ENCODE measurements at regions of chr5 and their contacts with region 1.

Region 1: DNA sequence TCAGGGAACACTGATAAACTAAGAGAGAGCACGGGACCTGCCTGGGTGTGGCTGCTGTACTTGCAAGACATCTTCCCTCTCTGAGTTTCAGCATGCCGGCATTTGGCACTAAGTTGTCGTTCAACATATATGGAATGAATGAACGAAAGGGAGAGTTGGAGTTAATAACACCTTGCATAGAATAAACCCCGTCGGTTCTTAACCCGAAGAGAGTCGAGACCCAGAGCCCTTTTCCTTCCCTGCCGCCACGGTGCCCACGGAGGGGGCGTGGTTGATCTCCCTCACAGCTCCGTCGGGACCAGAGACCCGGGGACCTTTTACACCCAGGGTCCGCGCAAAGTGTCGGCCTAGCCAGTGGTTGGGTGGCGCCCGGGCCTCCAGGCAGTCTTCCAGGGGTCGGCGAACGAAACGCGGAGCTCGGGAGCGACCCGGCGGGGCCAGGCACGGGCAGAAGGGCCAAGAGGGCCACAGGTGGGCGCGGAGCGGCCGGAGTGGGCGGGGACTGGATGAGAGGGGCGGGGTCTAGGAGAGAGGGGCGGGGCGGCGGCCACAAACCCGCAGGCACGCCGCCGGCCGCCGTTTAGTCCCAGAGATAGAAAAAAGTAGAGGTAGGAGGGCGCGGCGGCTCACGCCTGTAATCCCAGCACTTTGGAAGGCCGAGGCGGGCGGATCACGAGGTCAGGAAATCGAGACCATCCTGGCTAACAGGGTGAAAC is 735 bp upstream of the RPL26L1 start:
- DNase-seq: peak in 7 of 9 donors; percentile 13 to 76 (median 57)
- ATAC-seq: peak; percentile 84
- H3K4me3 ChIP-seq: peak overlapping the region; percentile 90
- H3K4me3 Mint-ChIP-seq: peak overlapping the region; percentile 88 to 98 (median 97)
- H3K27ac ChIP-seq: peak overlapping the region; percentile 95
- H3K27ac Mint-ChIP-seq: peak overlapping the region; percentile 94 to 99 (median 98)
- H3K4me1 ChIP-seq: peaks cover 9 to 10% of the 10 kb centered on the region in 2 donors
- H3K4me1 Mint-ChIP-seq: peaks cover 18 to 45% (median 37%) of the 10 kb centered on the region in 7 donors
- H3K27me3 ChIP-seq: no peaks in the 10 kb centered on the region
- H3K27me3 Mint-ChIP-seq: peaks cover 0 to 4% (median 0%) of the 10 kb centered on the region in 5 donors

Region 2: DNA sequence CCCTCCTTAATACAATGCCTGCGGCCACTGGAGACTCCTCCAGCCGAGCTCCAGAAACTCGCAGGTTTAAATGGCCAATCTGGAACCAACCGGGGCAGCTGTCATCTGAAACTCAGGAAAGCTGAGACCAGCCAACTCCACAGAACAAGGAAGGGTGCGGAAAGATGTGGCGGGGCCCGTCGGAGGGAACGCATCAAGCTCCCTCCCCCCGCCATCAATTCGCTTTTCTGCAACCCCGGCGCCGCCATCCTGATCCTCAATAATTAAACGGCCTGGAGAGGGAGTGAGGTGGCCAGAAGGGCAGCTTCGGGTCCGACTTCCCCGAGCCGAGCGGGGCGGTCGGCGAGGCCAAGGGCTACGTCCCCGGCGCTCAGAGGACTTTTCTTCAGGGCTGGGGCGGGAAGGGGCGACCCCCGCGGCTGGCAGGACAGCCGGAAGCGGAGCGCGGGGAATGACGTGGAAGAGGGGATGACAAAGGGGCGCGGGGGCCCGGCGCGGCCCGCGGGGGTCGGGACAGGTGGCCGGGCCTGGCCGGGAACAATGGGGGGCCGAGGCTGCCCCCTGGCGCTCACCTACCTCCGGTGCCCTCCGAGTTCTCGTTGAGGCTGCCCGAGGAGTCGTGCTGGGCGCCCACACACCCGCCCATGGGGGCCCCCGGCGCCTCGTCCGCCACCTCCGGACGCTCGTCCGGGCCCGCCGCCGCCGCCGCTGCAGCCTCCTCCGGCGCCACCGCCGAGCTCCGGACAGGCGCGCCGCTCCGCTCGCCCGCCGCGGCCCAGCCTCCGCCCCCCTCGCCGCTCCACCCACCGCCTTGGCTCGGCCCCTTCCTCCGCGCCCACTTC is 675.2 kb before region 1 on chr5 and contains the start of gene UBTD2:
- CTCF ChIA-PET with region 1: no interaction called
- POLR2A ChIA-PET with region 1: no interaction called
- intact Hi-C with region 1: loop called in 1 of 2 experiments (anchors 2 kb)
- DNase-seq: peak in 7 of 9 donors; percentile 51 to 84 (median 67)
- ATAC-seq: peak; percentile 89
- H3K4me3 ChIP-seq: peak within 1 kb of the TSS; percentile 73
- H3K4me3 Mint-ChIP-seq: peak within 1 kb of the TSS; percentile 85 to 94 (median 90)
- H3K27ac ChIP-seq: peak within 1 kb of the TSS; percentile 61
- H3K27ac Mint-ChIP-seq: peak within 1 kb of the TSS; percentile 67 to 94 (median 75)
- H3K4me1 ChIP-seq: peaks cover 11 to 13% of the 10 kb centered on the region in 2 donors
- H3K4me1 Mint-ChIP-seq: peaks cover 10 to 34% (median 29%) of the 10 kb centered on the region in 7 donors
- H3K27me3 ChIP-seq: no peaks in the 10 kb centered on the region
- H3K27me3 Mint-ChIP-seq: peaks cover 0 to 24% (median 0%) of the 10 kb centered on the region in 5 donors
- total RNA-seq, gene UBTD2: 2.3 to 8.3 (median 5.9) TPM

Region 3: DNA sequence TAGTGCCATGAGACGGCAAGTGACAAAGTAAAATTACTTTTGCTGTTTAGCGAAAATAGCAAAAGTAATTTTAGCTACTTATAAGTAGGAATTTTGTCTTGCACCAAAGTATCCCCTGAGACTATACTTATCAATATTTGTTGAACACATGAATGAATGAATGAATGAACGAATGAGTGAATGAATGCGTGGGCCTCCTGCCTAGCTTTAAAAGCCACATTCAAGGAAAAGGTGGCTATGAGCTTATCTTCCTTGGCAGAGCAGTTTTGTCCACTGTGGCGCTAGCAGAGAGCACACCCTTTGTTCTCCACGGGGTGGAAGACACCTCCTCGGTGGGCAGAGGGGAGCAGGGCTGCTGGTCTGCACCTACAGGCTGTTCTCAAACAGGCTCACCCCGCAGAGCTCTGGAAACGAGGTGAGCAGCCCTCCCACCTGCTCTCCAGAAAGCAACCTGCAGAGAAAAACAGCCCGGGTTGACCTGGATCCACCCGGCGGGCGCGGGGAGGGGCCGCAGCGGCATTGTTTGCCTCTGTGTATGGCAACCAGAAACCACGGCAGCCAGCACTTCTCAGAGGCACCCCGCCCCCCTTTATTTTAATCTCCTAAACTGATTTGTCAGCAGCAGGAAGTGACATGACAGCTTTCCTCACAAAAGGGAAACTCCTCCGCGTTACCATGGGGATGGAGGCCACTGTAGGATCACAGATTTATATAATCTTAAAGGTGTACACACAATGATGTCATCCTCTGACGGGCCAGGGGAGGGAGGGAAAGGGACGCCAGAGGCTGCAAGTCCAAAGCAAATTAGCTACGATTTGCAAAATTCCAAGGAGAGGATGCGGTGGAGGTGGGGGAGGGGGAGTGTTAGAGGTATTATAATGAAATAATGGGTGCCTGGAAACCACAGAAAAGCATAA is 193.4 kb before region 1 on chr5:
- CTCF ChIA-PET with region 1: no interaction called
- POLR2A ChIA-PET with region 1: interaction called, 6 read pairs
- intact Hi-C with region 1: loop called (anchors 1 kb)
- DNase-seq: peak; percentile 86 to 100 (median 99)
- ATAC-seq: peak; percentile 73
- H3K4me3 ChIP-seq: peak overlapping the region; percentile 64
- H3K4me3 Mint-ChIP-seq: peak overlapping the region; percentile 80 to 93 (median 84)
- H3K27ac ChIP-seq: peak overlapping the region; percentile 93
- H3K27ac Mint-ChIP-seq: peak overlapping the region; percentile 94 to 100 (median 97)
- H3K4me1 ChIP-seq: peaks cover 25 to 31% of the 10 kb centered on the region in 2 donors
- H3K4me1 Mint-ChIP-seq: peaks cover 8 to 62% (median 52%) of the 10 kb centered on the region in 7 donors
- H3K27me3 ChIP-seq: no peaks in the 10 kb centered on the region
- H3K27me3 Mint-ChIP-seq: peaks cover 0 to 8% (median 0%) of the 10 kb centered on the region in 5 donors

Region 4: DNA sequence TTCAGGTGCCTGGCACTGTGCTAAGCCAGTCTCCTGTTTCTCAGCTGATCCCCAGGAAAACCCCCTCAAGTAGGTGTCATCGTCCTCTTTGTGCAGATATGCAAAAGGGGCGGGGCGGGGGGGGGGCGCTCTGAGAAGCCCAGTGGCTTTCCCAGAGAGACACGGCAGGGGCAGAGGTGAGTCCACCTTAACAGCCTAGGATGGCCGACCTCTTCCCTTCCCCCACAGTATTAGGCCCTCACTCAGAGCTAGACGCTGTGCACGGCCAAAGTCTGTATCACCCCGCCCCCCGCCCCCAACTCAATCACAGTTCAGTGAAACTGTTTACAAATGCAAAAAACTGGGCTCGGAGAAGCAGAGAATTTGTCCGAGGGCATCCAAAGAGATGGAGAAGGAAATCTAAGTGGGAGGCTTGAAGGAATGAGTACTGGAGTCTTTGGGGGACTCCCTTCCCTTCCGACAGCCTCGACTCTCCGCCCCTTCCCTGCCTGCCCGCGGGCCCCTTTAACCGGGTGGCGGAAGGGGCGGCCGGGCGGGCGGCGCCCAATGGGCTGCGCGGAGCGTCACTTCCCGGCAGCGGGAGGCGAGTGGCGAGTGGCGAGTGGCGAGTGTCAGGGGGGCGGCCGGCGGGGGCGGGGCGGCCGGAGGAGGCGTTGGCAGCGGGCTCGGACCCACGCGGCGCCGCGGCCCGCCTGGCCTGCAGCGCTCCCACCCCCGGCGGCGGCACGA is 124.6 kb before region 1 on chr5 and contains the start of gene ERGIC1:
- CTCF ChIA-PET with region 1: no interaction called
- POLR2A ChIA-PET with region 1: no interaction called
- intact Hi-C with region 1: loop called (anchors 1 kb)
- DNase-seq: peak; percentile 49 to 84 (median 58)
- ATAC-seq: peak; percentile 87
- H3K4me3 ChIP-seq: peak within 1 kb of the TSS; percentile 68
- H3K4me3 Mint-ChIP-seq: peak within 1 kb of the TSS; percentile 85 to 93 (median 90)
- H3K27ac ChIP-seq: peak within 1 kb of the TSS; percentile 87
- H3K27ac Mint-ChIP-seq: peak within 1 kb of the TSS; percentile 87 to 97 (median 94)
- H3K4me1 ChIP-seq: peaks cover 23 to 38% of the 10 kb centered on the region in 2 donors
- H3K4me1 Mint-ChIP-seq: peaks cover 25 to 50% (median 40%) of the 10 kb centered on the region in 7 donors
- H3K27me3 ChIP-seq: no peaks in the 10 kb centered on the region
- H3K27me3 Mint-ChIP-seq: no peaks in the 10 kb centered on the region
- total RNA-seq, gene ERGIC1: 44.4 to 71.3 (median 53.5) TPM

Region 5: DNA sequence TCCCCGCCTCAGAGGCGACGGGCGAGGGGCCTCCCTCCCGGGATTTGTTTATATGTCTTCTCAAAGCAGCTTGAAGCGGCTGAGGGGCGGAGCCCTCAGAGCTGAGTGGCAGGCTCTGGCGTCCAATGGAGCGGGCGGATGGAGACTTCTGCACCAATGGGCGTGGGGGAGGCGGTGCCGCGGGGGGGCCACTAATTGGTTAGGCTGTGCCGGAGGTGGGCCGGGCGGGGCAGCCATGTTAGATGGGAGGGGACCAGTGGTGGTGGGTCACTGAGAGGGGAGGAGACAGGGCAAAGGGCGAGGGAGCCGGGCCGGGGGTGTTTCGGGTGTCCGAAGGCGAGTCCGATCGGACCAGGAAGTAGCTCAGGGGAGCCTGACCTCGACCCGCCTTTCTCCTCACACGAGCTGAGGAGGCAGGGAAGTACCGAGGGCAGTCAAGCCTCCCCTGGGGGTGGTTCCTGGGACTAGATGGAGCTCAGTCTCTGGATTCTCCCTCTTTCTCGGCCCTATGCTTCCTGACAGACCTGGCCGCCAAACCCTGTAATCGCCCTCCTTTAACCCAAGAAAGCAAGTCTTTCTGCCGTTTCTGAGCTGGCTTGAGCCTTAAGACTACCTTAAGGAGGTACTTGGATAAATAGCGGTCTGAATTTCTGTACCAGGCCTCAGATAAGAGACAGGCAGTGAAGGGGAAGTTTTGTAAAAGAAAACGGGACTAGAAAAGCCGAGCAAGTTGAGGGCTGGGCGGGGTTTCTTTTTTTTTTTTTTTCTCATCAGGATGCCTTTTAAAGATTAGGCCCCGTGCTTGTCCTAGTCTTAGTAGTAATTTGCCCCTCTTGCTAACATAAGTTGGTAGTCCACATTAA is 98.8 kb after region 1 on chr5:
- CTCF ChIA-PET with region 1: no interaction called
- POLR2A ChIA-PET with region 1: interaction called, 3 read pairs
- intact Hi-C with region 1: loop called (anchors 1 kb)
- DNase-seq: peak; percentile 96 to 99 (median 98)
- ATAC-seq: peak; percentile 90
- H3K4me3 ChIP-seq: peak overlapping the region; percentile 96
- H3K4me3 Mint-ChIP-seq: peak overlapping the region; percentile 91 to 97 (median 94)
- H3K27ac ChIP-seq: peak overlapping the region; percentile 97
- H3K27ac Mint-ChIP-seq: peak overlapping the region; percentile 90 to 96 (median 94)
- H3K4me1 ChIP-seq: peaks cover 22 to 33% of the 10 kb centered on the region in 2 donors
- H3K4me1 Mint-ChIP-seq: peaks cover 21 to 72% (median 59%) of the 10 kb centered on the region in 7 donors
- H3K27me3 ChIP-seq: peaks cover 0 to 5% of the 10 kb centered on the region in 2 donors
- H3K27me3 Mint-ChIP-seq: no peaks in the 10 kb centered on the region

Region 6: GRCh38 chr5:173217626-173218397 is 259.3 kb after region 1 on chr5:
- CTCF ChIA-PET with region 1: no interaction called
- POLR2A ChIA-PET with region 1: no interaction called
- intact Hi-C with region 1: no loop called
- DNase-seq: no peak
- ATAC-seq: no peak
- H3K4me3 ChIP-seq: no peak overlapping the region
- H3K4me3 Mint-ChIP-seq: no peak overlapping the region
- H3K27ac ChIP-seq: no peak overlapping the region
- H3K27ac Mint-ChIP-seq: peak overlapping the region in 1 of 9 donors; percentile 66
- H3K4me1 ChIP-seq: no peaks in the 10 kb centered on the region
- H3K4me1 Mint-ChIP-seq: no peaks in the 10 kb centered on the region
- H3K27me3 ChIP-seq: no peaks in the 10 kb centered on the region
- H3K27me3 Mint-ChIP-seq: peaks cover 10 to 36% (median 29%) of the 10 kb centered on the region in 5 donors

Region 7: GRCh38 chr5:173615884-173616576 is 657.5 kb after region 1 on chr5:
- CTCF ChIA-PET with region 1: no interaction called
- POLR2A ChIA-PET with region 1: no interaction called
- intact Hi-C with region 1: loop called (anchors 1 kb)
- DNase-seq: peak; percentile 47 to 78 (median 73)
- ATAC-seq: peak; percentile 73
- H3K4me3 ChIP-seq: peak overlapping the region; percentile 71
- H3K4me3 Mint-ChIP-seq: peak overlapping the region; percentile 85 to 97 (median 92)
- H3K27ac ChIP-seq: peak overlapping the region; percentile 99
- H3K27ac Mint-ChIP-seq: peak overlapping the region; percentile 79 to 98 (median 93)
- H3K4me1 ChIP-seq: peaks cover 21 to 24% of the 10 kb centered on the region in 2 donors
- H3K4me1 Mint-ChIP-seq: peaks cover 28 to 60% (median 51%) of the 10 kb centered on the region in 7 donors
- H3K27me3 ChIP-seq: no peaks in the 10 kb centered on the region
- H3K27me3 Mint-ChIP-seq: no peaks in the 10 kb centered on the region